HepG2 (cell line): ENCODE measurements at regions of chr2 and their contacts with region 1.

Region 1: DNA sequence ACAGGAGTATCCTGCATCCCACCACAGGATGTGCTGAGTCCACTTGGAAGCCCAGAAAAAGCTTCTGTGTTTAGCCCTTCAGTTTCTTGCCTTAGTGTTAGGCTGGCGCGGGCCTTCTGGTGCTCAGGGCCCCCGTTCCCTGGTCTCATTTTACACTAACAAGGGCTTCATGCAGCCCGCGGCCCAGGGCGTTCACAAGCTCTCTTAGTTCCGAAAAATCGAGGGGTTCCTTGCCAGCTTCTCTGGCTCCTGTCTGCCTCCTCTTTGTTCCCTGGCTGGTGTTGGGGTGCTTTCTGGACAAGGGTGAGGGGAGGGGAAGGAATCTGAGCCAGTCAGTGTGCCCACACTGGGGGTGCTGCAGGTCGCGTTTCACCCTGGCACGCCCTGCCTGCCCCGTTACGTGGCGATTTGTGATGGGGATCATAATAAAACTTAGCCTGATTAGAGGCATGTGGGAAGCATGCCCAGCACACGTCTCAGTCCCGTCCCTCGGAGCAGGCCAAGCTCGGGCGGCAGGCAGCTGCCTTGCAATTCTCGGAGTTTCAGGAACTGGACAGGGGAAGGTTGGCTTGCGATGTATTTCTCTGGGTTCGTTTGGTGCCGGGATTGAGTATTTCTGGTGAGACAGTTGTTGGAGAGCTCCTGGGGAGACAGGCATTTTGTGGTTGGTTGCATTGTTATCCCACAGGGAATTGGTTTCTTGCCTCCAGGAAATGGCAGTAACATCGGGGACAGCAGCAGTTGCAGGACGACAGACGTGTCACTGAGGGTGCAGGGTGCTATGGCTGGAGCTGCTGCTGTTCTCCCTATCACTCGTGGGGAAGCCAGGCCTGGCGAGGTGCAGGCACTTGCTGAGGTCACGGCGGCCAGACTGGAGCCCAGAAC is 22.9 kb downstream of the SH3BP4 start:
- DNase-seq: no peak
- ATAC-seq: no peak
- H3K4me3 ChIP-seq: no peak overlapping the region
- H3K27ac ChIP-seq: no peak overlapping the region
- H3K4me1 ChIP-seq: peaks cover 82% of the 10 kb centered on the region
- H3K27me3 ChIP-seq: no peaks in the 10 kb centered on the region
- CTCF ChIP-seq: no peak
- EP300 ChIP-seq: no peak
- POLR2A ChIP-seq: no peak
- RAD21 ChIP-seq: no peak

Region 2: GRCh38 chr2:234679741-234680687 is 294.7 kb before region 1 on chr2:
- CTCF ChIA-PET with region 1: no interaction called
- POLR2A ChIA-PET with region 1: interaction called, 12 read pairs
- in situ Hi-C with region 1: no loop called
- intact Hi-C with region 1: no loop called
- DNase-seq: peak; percentile 98
- ATAC-seq: peak; percentile 93
- H3K4me3 ChIP-seq: peak overlapping the region in 1 of 3 experiments; percentile 5; a peak in 1 of 6 replicates
- H3K27ac ChIP-seq: peak overlapping the region; percentile 86
- H3K4me1 ChIP-seq: peaks cover 97% of the 10 kb centered on the region
- H3K27me3 ChIP-seq: no peaks in the 10 kb centered on the region
- CTCF ChIP-seq: no peak
- EP300 ChIP-seq: peak; percentile 38 to 97; a peak in 3 of 4 replicates
- POLR2A ChIP-seq: no peak
- RAD21 ChIP-seq: peak; percentile 61; the same call in 1 of the 2 replicates

Region 3: DNA sequence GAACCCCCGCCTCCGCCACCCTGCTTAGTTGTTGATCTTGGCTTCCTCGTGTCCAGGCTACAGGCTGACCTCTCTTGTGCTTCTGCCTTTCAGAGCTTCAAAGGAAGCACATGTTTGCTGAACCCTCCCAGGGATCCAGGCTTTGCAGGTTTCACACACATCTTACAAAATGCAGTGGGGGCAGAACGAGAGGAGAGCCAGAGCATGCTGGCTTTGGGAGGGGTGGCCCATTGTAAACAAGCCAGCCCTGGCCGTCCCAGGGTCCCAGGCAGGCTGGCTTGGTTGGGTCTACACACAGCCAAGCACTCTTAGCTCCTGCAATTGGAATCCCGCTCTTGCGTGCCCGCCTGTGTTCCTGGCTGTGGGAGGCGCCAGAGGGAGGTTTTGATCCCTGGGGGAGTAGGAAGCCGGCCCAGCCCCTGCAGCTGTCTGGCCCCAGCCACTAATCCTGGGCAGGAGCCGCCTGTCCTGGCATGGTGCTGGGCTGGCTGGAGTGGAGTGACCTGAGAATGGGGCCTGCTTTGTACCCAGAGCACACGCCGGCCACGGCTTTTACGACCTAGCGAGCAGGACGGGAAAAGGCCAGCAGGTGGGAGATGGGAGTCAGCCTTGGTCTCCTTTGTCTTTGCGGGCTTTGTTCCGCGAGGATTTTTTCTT is 31.0 kb after region 1 on chr2:
- CTCF ChIA-PET with region 1: no interaction called
- POLR2A ChIA-PET with region 1: interaction called, 268 read pairs
- in situ Hi-C with region 1: no loop called
- intact Hi-C with region 1: no loop called
- DNase-seq: peak; percentile 98
- ATAC-seq: peak; percentile 88
- H3K4me3 ChIP-seq: peak overlapping the region in 1 of 3 experiments; percentile 29; a peak in 2 of 6 replicates
- H3K27ac ChIP-seq: peak overlapping the region; percentile 70
- H3K4me1 ChIP-seq: peaks cover 84% of the 10 kb centered on the region
- H3K27me3 ChIP-seq: no peaks in the 10 kb centered on the region
- CTCF ChIP-seq: peak; percentile 83
- EP300 ChIP-seq: peak; percentile 70 to 88; a peak in 3 of 4 replicates
- POLR2A ChIP-seq: no peak
- RAD21 ChIP-seq: peak; percentile 83